Posterior vena cava (tissue), 2 donors: ENCODE measurements at regions of chr6 and their contacts with region 1.

Region 1: DNA sequence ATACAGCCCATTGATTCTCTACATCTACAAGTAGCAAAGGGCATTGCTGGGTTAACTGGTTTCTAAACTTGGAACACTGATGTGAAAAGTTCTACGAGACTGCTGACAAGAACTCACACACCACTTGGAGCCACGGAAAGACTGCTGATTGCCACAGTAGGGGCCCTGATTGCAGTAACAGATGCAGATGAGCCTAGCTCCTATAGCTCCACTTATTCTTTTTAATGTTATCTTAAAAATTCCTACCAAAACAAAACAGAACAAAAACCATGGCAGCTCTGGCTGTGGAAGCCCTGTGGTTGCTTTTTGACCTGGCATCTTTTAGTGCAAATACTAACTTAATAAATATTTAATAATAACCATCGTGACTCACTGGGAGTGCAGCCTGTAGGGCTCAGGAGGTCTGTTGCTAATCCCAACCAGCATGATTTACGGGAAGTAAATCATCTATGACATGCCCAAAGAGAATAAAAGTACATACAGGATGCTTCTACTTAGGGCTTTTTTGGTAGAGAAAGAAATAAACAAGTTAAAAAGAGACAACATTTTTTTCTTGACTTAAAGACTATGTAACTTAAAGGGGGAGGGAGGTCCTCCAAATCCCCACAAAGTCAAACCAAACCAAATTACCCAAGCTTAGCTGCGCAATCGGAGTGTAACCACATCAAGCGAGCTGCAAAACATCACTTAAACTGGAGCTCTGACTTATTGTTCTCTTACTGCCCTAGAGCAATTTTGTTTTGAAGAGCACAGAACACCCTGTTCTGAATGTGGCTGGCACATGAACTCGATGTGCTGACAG is 87.2 kb downstream of the FKBP5 start:
- DNase-seq: no peak

Region 2: DNA sequence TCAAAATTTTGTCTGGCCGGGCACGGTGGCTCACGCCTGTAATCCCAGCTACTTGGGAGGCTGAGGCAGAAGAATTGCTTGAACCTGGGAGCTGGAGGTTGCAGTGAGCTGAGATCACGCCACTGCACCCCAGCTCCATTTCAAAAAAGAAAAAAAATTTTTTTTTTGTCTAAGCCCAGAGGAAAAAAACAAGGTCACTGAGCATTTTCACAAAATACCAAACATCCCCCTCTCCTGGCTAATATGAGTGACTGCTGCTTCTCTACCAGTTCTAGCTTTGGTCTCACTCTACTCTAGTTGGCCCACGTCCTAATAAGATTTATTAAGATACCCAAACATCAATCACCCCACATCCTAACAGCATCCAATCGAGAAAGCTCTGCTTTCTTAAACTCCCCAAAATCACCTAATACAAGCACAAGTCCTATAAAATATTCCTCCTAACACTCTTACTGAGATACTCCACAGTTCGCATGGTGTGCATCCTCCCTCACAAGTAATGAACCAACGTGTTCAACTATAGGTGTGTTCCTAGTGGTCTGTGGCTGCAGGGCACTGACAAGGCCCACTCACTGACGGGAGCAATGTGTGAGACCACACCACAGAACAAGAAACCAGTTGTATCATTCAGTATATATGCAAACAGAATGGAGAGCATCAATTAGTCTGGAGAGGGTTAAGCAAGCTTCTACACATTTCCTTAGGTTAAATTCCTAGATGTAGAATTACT is 23.0 kb after region 1 on chr6:
- intact Hi-C with region 1: loop called in 1 of 2 experiments (anchors 2 kb)
- DNase-seq: no peak

Region 3: GRCh38 chr6:35731736-35732532 is 130.4 kb after region 1 on chr6:
- intact Hi-C with region 1: loop called in 1 of 2 experiments (anchors 5 kb)
- DNase-seq: peak; percentile 99